Mammary epithelial cell (primary cell): ENCODE measurements at regions of chr17 and their contacts with region 1.

Region 1: DNA sequence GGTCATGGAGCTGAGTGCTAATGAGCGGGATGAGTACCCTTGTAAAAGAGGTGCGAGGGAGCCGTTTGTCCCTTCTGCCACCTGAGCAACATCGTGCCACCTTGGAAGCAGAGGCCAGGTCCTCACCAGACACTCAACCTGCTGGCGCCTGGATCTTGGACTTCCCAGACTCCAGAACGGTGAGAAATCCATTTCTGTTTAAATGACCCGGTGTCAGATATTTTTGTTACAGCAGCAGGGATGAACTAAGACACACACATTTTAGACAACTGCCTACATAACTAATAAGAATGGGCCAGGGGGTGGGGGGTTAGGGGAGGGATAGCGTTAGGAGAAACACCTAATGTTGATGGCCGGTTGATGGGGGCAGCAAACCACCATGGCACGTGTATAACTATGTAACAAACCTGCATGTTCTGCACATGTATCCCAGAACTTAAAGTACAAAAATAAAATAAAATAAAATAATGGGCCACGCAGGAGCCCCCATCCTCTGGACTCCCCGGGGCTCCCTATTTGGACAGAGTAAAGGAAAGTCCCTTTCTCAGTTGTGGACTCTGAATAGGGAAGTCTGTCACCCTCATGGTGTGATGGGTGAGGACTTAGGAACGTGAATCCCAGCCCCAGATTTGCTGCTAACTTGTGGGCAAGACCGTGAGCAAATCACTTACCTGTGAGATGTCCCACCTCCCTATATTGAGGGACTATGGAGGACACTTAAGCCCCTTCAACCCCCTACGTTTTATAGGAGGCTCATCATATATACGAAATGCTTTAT is 60.6 kb upstream of the DNAH17 start:
- DNase-seq: no peak
- H3K4me3 ChIP-seq: no peak overlapping the region
- H3K27ac ChIP-seq: no peak overlapping the region
- H3K4me1 ChIP-seq: no peaks in the 10 kb centered on the region
- H3K27me3 ChIP-seq: no peaks in the 10 kb centered on the region
- CTCF ChIP-seq: no peak

Region 2: GRCh38 chr17:78313735-78314648 is 323.8 kb before region 1 on chr17:
- CTCF ChIA-PET with region 1: no interaction called
- dilution Hi-C with region 1: no loop called
- in situ Hi-C with region 1: no loop called
- intact Hi-C with region 1: no loop called
- DNase-seq: peak; percentile 93
- H3K4me3 ChIP-seq: peak overlapping the region in 2 of 3 experiments; percentile 33 to 46
- H3K27ac ChIP-seq: peak overlapping the region; percentile 79
- H3K4me1 ChIP-seq: peaks cover 46% of the 10 kb centered on the region
- H3K27me3 ChIP-seq: no peaks in the 10 kb centered on the region
- CTCF ChIP-seq: no peak

Region 3: DNA sequence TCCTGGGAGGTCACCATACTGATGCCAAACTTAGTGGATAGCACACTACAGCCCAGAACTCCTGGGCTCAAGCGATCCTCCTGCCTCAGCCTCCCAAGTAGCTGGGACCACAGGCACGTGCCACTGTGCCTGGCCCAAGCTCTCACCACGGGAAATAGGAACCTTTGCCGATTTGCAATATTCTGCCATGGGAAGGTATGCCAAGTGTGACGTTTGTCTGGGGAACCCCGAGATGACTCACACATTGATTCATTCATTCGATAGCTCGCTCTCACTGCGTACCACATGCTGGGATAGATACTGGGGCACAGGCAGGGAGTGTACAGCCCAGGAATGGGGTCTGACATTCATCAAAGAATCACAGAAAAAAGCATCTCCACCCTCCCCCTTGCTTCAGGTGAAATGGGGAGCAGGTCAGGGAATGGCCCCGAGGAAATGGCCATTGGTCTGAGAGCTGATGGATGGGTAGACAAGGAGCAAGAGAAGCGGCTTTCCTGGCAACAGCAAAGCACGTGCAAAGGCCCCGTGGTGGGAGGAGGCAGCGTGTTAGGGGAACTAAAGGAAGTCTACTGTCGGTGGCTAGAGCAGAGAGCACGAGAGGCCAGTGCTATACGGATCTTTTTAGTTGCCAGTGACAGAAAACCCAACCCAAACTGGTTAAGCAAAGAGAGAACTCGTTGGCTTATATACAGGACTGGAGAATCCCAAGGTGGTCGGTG is 104.8 kb before region 1 on chr17:
- CTCF ChIA-PET with region 1: no interaction called
- dilution Hi-C with region 1: loop called (anchors 10 kb)
- in situ Hi-C with region 1: no loop called
- intact Hi-C with region 1: no loop called
- DNase-seq: peak; percentile 95
- H3K4me3 ChIP-seq: no peak overlapping the region
- H3K27ac ChIP-seq: peak overlapping the region; percentile 63
- H3K4me1 ChIP-seq: peaks cover 31% of the 10 kb centered on the region
- H3K27me3 ChIP-seq: no peaks in the 10 kb centered on the region
- CTCF ChIP-seq: no peak

Region 4: DNA sequence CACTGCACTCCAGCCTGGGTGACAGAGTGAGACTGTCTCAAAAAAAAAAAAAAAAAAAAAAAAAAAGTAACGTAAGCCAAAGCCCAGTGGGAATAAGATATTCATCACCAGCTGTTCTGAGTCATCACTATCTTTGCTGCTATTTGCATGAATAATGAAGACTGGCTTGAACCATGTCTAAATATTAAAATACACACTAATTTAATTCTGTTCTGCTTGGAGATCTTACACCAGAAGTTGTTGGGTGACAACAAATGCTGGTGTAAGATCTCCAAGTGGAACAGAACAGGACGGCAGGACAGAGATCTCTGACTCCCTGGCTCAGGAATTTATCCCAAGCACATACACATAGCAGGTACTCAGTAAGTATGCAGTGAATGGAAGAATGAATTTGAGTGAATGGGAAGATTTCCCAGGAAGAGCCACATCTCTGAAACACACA is 80.2 kb before region 1 on chr17:
- CTCF ChIA-PET with region 1: no interaction called
- dilution Hi-C with region 1: loop called (anchors 10 kb)
- in situ Hi-C with region 1: no loop called
- intact Hi-C with region 1: no loop called
- DNase-seq: peak; percentile 61
- H3K4me3 ChIP-seq: no peak overlapping the region
- H3K27ac ChIP-seq: no peak overlapping the region
- H3K4me1 ChIP-seq: peaks cover 14% of the 10 kb centered on the region
- H3K27me3 ChIP-seq: no peaks in the 10 kb centered on the region
- CTCF ChIP-seq: no peak

Region 5: DNA sequence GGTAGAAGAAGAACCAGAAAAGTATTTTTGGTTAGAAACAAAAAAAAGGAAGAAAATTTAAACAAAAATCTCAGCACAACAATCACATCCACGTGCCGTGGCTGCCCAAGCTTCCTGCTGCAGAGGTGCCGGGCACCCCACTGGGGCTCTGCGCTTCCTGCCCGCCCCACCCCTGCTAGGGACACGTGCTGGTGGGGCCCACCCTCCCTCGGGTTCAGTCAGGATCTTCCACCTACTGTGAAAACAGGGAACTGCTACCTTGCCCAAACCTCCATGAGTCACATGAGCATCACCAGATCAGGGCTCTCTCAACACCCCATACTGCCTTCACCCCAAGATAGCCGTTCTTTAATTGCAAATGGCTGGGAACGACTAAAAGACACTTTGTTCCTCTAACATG is 168.6 kb after region 1 on chr17:
- CTCF ChIA-PET with region 1: no interaction called
- dilution Hi-C with region 1: no loop called
- in situ Hi-C with region 1: no loop called
- intact Hi-C with region 1: no loop called
- DNase-seq: no peak
- H3K4me3 ChIP-seq: no peak overlapping the region
- H3K27ac ChIP-seq: no peak overlapping the region
- H3K4me1 ChIP-seq: peaks cover 4% of the 10 kb centered on the region
- H3K27me3 ChIP-seq: no peaks in the 10 kb centered on the region
- CTCF ChIP-seq: no peak